ENCODE measurements at regions of chr5 and their contacts with region 1.

Region 1: DNA sequence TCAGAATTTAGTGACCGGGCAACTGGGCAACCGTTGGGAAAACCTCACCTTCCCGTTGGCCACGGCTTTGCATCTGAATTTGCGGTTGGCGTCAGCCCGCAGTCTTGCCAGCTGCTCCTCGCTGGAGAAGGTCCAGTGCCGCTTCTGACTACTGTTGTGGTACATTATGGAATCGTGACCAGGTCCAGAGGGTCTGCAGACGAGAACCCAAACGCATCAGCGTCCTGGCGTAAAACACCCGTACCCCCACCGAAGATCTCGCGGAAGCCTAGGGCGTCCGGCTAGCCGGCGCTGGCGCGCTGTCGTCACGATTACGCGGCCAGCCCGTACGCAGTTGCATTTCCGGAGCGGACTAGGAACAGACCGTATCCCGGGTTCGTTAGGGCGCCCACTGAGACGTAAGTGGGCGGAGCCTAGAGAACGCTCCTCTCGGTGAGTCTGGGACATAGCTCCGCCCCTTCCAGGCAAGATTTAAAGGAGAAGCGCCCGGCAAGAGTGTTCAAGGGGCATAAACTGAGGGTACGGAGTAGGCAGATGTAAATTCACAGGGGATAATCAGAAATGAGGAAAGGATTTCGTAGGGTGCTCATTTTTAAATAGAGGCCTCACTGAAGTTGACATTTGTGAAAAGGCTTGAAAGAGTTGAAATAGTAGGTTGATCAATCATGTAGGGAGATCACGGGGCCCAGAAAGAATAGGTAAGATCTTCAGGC is at the start of gene CCNH:
- DNase-seq: peak; percentile 97
- H3K4me3 Mint-ChIP-seq: peak within 1 kb of the TSS; percentile 91
- H3K27ac Mint-ChIP-seq: peak within 1 kb of the TSS; percentile 94
- H3K4me1 Mint-ChIP-seq: peaks cover 37% of the 10 kb centered on the region
- H3K27me3 Mint-ChIP-seq: no peaks in the 10 kb centered on the region
- total RNA-seq, gene CCNH: 65.8 to 72.7 TPM

Region 2: GRCh38 chr5:86617756-86618576 is 794.8 kb before region 1 on chr5 and contains the start of gene COX7C:
- CTCF ChIA-PET with region 1: no interaction called
- POLR2A ChIA-PET with region 1: no interaction called
- intact Hi-C with region 1: loop called (anchors 1 kb)
- DNase-seq: peak; percentile 95
- H3K4me3 Mint-ChIP-seq: peak within 1 kb of the TSS; percentile 100
- H3K27ac Mint-ChIP-seq: peak within 1 kb of the TSS; percentile 99
- H3K4me1 Mint-ChIP-seq: peaks cover 20% of the 10 kb centered on the region
- H3K27me3 Mint-ChIP-seq: peaks cover 3% of the 10 kb centered on the region
- total RNA-seq, gene COX7C: 640 to 681 TPM

Region 3: DNA sequence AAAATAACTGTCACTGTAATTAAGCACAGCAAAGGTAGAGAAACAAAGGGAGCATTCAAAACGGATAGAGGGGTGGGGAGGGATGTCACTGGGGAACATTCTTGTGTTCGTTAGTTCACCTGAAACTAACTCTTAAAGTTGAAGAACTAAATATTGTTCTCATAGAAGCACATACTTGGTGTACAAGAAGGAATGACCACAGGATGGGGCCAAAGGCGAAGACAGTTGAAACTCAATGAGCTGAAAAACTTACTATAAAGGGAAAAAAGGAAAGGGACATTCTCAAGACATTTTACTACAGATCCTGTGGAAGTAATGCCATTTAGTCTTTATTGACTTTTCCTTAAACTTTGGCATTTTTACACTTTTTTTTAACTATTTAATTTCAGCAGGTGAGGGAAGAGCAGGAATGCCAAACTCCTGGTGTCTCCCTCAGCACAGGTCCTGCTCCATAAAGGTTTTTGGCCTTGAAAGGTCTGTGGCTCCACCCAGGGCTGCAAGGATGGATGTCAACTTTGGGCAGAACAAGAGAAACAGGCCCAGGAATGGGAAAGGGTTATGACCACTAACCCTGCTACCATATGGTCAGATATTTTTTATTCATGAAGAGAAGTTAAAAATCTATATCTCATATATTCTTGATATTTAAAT is 342.7 kb before region 1 on chr5:
- CTCF ChIA-PET with region 1: no interaction called
- POLR2A ChIA-PET with region 1: no interaction called
- intact Hi-C with region 1: loop called (anchors 5 kb)
- DNase-seq: no peak
- H3K4me3 Mint-ChIP-seq: no peak overlapping the region
- H3K27ac Mint-ChIP-seq: no peak overlapping the region
- H3K4me1 Mint-ChIP-seq: peaks cover 16% of the 10 kb centered on the region
- H3K27me3 Mint-ChIP-seq: no peaks in the 10 kb centered on the region

Region 4: GRCh38 chr5:87267574-87268125 is 145.1 kb before region 1 on chr5 and contains the start of gene RASA1:
- CTCF ChIA-PET with region 1: no interaction called
- POLR2A ChIA-PET with region 1: interaction called, 11 read pairs
- intact Hi-C with region 1: loop called (anchors 1 kb)
- DNase-seq: peak; percentile 92
- H3K4me3 Mint-ChIP-seq: peak within 1 kb of the TSS; percentile 99
- H3K27ac Mint-ChIP-seq: peak within 1 kb of the TSS; percentile 99
- H3K4me1 Mint-ChIP-seq: peaks cover 34% of the 10 kb centered on the region
- H3K27me3 Mint-ChIP-seq: no peaks in the 10 kb centered on the region
- total RNA-seq, gene RASA1: 25.1 to 25.4 TPM

Region 5: GRCh38 chr5:87400305-87400899 is 12.4 kb before region 1 on chr5:
- CTCF ChIA-PET with region 1: interaction called, 27 read pairs
- POLR2A ChIA-PET with region 1: no interaction called
- intact Hi-C with region 1: no loop called
- DNase-seq: no peak
- H3K4me3 Mint-ChIP-seq: no peak overlapping the region
- H3K27ac Mint-ChIP-seq: no peak overlapping the region
- H3K4me1 Mint-ChIP-seq: peaks cover 31% of the 10 kb centered on the region
- H3K27me3 Mint-ChIP-seq: no peaks in the 10 kb centered on the region

Region 6: DNA sequence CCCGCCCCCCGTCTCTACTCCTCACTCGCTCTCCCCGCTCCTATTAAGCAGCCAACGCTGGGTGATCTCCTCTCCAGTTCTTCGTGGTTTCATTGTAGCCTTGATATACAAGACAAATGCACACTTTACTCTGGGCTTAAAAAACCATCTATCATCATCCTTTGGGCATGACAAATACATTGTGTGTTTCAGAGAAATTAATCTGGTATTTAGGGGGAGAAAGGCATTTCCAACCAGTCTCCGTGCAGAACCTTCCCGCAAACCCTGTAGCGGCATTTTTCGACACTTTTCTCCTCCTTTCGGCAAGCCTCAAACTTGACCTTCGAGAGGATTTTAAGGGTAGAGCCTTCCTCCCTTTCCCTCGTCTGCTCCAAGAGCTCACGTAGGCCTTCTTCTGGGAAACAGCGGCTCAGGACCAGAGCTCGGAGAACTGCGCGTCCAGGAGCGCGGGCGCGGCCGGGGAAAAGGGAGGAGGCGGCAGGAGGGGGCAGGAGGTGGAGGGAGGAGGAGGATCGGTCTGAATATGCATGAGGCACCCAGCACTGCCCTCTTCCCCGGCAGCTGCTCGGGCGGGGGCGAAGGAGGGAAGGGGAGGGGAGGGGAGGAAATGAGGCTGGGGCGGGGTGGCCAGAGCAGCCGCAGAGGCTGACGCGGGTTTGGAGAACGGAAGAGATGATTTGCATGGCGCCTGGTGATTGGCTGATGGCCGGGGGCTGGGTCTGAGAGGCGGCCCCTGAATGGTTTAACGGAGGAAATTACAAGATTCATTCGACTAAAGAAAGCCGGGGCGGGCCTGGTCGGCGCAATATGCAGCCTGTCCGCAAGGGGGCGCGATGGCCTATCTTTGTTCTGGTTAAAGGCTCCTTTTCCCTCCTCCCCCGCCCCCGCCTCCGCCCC is 728.3 kb after region 1 on chr5:
- CTCF ChIA-PET with region 1: no interaction called
- POLR2A ChIA-PET with region 1: no interaction called
- intact Hi-C with region 1: loop called (anchors 5 kb)
- DNase-seq: peak; percentile 94
- H3K4me3 Mint-ChIP-seq: no peak overlapping the region
- H3K27ac Mint-ChIP-seq: no peak overlapping the region
- H3K4me1 Mint-ChIP-seq: peaks cover 17% of the 10 kb centered on the region
- H3K27me3 Mint-ChIP-seq: peaks cover 31% of the 10 kb centered on the region

Region 7: GRCh38 chr5:88502179-88503040 is 1089.6 kb after region 1 on chr5:
- CTCF ChIA-PET with region 1: no interaction called
- POLR2A ChIA-PET with region 1: no interaction called
- intact Hi-C with region 1: loop called (anchors 5 kb)
- DNase-seq: peak; percentile 12
- H3K4me3 Mint-ChIP-seq: peak overlapping the region; percentile 77
- H3K27ac Mint-ChIP-seq: peak overlapping the region; percentile 58
- H3K4me1 Mint-ChIP-seq: peaks cover 12% of the 10 kb centered on the region
- H3K27me3 Mint-ChIP-seq: no peaks in the 10 kb centered on the region

Measured in activated CD4-positive, alpha-beta memory T cell treated with anti-CD3 and anti-CD28 coated beads for 36 hours (primary cell).